ENCODE measurements at regions of chr5 and their contacts with region 1.

Region 1: DNA sequence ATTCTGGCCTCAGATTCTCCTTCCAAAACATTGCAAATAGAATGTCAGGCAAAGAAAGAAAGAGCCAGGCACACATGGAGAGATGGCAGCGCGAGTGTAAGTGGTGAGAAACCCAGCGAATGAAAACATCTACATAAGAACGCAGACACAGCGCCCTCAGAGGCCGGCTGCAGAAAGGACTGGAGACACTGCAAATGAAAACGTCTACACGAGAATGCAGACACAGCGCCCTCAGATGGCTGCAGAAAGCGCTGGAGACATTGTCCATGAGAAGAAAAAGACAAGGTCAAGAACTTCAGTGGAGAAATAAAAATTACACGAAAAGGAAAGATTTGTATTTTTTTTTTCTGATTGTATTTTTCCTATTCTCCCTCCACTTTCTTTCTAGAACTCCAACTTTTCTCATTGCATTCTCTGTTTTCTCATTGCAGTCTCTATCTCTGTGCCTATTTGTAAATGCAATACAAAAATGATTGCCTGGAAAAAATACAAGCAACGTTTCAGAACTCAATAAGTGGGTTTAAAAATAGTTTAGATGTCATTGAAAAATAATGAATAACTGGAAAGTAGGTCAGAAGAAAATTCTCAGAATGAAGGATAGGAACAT is 117.9 kb upstream of the LPCAT1 start:
- DNase-seq: peak; percentile 78 to 92
- H3K4me3 ChIP-seq: no peak overlapping the region
- H3K27ac ChIP-seq: no peak overlapping the region
- H3K4me1 ChIP-seq: no peaks in the 10 kb centered on the region
- H3K27me3 ChIP-seq: peaks cover 87% of the 10 kb centered on the region
- CTCF ChIP-seq: peak; percentile 90

Region 2: GRCh38 chr5:923281-923873 is 718.3 kb before region 1 on chr5:
- CTCF ChIA-PET with region 1: interaction called, 5 read pairs
- POLR2A ChIA-PET with region 1: no interaction called
- intact Hi-C with region 1: loop called (anchors 1 kb)
- DNase-seq: peak; percentile 60 to 95
- H3K4me3 ChIP-seq: no peak overlapping the region
- H3K27ac ChIP-seq: no peak overlapping the region
- H3K4me1 ChIP-seq: no peaks in the 10 kb centered on the region
- H3K27me3 ChIP-seq: no peaks in the 10 kb centered on the region
- CTCF ChIP-seq: peak; percentile 96

Region 3: DNA sequence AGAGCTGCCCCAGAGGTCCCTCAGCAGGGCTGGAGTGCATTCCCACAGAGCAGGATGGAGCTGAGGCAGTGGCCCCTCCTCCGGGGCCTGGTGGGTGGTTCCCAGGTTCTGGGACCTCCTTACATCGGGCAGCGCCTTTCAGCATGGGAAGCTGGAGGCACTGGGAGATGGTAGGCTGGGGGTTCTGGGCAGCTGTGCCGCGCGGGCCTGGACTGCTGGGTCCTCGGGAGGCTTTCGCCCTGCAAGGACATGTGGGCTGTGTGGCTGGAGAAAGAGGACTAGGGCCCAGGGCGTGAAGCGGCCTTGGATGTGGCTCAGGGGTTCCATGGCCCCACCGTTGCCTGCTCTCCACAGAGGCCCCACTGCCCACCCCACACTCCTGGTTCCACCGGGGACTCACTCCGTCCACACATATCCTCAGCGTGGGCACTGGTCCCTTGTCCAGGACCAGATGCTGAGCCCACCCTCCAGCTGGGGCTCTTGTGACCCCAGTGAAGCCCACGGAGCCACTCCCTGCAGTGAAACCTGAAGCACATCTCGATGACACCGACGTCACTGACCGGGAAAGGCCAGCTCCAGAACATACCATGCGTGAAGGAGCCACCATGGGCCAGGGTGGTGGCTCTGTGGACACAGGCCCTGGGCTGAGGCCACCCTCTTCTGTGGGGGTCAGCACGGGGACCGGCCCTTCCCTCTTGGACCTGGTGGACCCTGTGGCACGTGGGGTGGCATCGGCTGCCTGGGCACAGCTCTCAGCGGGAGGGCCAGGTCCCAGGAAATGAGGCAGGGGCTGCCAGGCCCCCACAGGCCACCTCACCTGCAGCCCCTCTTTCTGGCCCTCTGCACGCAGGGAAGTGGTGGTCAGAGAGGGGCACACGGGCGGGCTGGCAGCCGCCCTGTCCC is 664.6 kb before region 1 on chr5:
- CTCF ChIA-PET with region 1: no interaction called
- POLR2A ChIA-PET with region 1: no interaction called
- intact Hi-C with region 1: no loop called
- DNase-seq: no peak
- H3K4me3 ChIP-seq: no peak overlapping the region
- H3K27ac ChIP-seq: no peak overlapping the region
- H3K4me1 ChIP-seq: no peaks in the 10 kb centered on the region
- H3K27me3 ChIP-seq: peaks cover 85% of the 10 kb centered on the region
- CTCF ChIP-seq: no peak

Region 4: GRCh38 chr5:1167728-1168709 is 473.6 kb before region 1 on chr5:
- CTCF ChIA-PET with region 1: interaction called, 4 read pairs
- POLR2A ChIA-PET with region 1: no interaction called
- intact Hi-C with region 1: loop called (anchors 1 kb)
- DNase-seq: peak; percentile 62 to 87
- H3K4me3 ChIP-seq: no peak overlapping the region
- H3K27ac ChIP-seq: no peak overlapping the region
- H3K4me1 ChIP-seq: no peaks in the 10 kb centered on the region
- H3K27me3 ChIP-seq: peaks cover 42% of the 10 kb centered on the region
- CTCF ChIP-seq: peak; percentile 89

Region 5: GRCh38 chr5:1479581-1480188 is 162.0 kb before region 1 on chr5:
- CTCF ChIA-PET with region 1: no interaction called
- POLR2A ChIA-PET with region 1: no interaction called
- intact Hi-C with region 1: loop called (anchors 2 kb)
- DNase-seq: peak in 1 of 2 experiments; percentile 45
- H3K4me3 ChIP-seq: no peak overlapping the region
- H3K27ac ChIP-seq: no peak overlapping the region
- H3K4me1 ChIP-seq: no peaks in the 10 kb centered on the region
- H3K27me3 ChIP-seq: no peaks in the 10 kb centered on the region
- CTCF ChIP-seq: peak; percentile 85

Region 6: DNA sequence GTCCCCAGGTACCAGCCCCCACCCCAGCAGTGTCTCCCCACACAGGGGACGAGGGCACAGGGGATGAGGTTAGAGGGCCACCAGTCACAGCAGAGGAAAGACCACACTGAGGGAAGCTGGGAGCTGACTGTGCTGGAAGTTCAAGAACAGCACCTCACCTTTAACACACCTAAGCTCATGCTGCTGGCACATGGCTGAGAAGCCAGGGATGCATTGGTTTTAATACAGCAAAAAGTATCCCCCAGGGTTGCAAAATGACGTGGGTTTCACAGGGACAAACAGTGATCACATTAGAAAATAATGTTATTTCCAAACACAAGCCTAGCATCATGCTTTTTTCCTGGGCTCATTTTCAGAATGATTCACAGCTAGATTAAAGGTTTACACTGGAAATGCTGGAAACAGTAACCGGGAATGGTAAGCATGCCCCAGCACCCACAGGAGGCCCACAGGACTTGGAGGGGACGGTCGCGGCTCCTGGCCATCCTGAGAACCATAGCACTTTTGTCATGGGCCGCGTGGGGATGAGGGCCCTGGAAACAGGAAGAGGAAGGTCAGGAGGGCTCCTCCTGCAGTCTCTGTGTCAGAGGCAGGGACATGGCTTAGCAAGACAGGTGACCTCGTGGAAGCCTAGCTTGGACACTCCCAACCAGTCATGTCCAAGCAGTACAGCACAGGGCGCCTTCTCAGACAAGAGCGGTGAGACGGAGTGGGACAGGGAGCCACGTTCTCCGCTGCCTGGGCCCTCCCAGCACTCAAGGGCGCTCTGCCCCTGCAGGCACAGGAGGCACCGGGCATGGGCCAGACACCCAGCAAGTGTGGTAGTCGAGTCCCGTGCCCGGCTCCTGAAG is 124.7 kb before region 1 on chr5:
- CTCF ChIA-PET with region 1: no interaction called
- POLR2A ChIA-PET with region 1: no interaction called
- intact Hi-C with region 1: loop called (anchors 2 kb)
- DNase-seq: peak; percentile 38 to 86
- H3K4me3 ChIP-seq: peak overlapping the region; percentile 3; the same call in 1 of the 2 replicates
- H3K27ac ChIP-seq: peak overlapping the region; percentile 85
- H3K4me1 ChIP-seq: peaks cover 66% of the 10 kb centered on the region
- H3K27me3 ChIP-seq: no peaks in the 10 kb centered on the region
- CTCF ChIP-seq: no peak

Region 7: GRCh38 chr5:1564182-1564748 is 77.4 kb before region 1 on chr5:
- CTCF ChIA-PET with region 1: no interaction called
- POLR2A ChIA-PET with region 1: no interaction called
- intact Hi-C with region 1: no loop called
- DNase-seq: peak; percentile 83 to 87
- H3K4me3 ChIP-seq: no peak overlapping the region
- H3K27ac ChIP-seq: peak overlapping the region; percentile 23
- H3K4me1 ChIP-seq: peaks cover 59% of the 10 kb centered on the region
- H3K27me3 ChIP-seq: 0 out of 2 replicates have a peak, but pooled peaks cover 1% of the 10 kb centered on the region
- CTCF ChIP-seq: no peak

Region 8: GRCh38 chr5:1685066-1685465 is 43.4 kb after region 1 on chr5:
- CTCF ChIA-PET with region 1: no interaction called
- POLR2A ChIA-PET with region 1: no interaction called
- intact Hi-C with region 1: no loop called
- DNase-seq: no peak
- H3K4me3 ChIP-seq: no peak overlapping the region
- H3K27ac ChIP-seq: no peak overlapping the region
- H3K4me1 ChIP-seq: no peaks in the 10 kb centered on the region
- H3K27me3 ChIP-seq: peaks cover 96% of the 10 kb centered on the region
- CTCF ChIP-seq: no peak